ENCODE measurements at regions of chr6 and their contacts with region 1.

Region 1: GRCh38 chr6:15491255-15491985 is 171.4 kb downstream of the DTNBP1 start:
- DNase-seq: peak; percentile 46
- ATAC-seq: peak; percentile 82
- H3K4me3 ChIP-seq: no peak overlapping the region
- H3K27ac ChIP-seq: no peak overlapping the region
- H3K4me1 ChIP-seq: no peaks in the 10 kb centered on the region
- H3K27me3 ChIP-seq: no peaks in the 10 kb centered on the region
- CTCF ChIP-seq: peak; percentile 97

Region 2: DNA sequence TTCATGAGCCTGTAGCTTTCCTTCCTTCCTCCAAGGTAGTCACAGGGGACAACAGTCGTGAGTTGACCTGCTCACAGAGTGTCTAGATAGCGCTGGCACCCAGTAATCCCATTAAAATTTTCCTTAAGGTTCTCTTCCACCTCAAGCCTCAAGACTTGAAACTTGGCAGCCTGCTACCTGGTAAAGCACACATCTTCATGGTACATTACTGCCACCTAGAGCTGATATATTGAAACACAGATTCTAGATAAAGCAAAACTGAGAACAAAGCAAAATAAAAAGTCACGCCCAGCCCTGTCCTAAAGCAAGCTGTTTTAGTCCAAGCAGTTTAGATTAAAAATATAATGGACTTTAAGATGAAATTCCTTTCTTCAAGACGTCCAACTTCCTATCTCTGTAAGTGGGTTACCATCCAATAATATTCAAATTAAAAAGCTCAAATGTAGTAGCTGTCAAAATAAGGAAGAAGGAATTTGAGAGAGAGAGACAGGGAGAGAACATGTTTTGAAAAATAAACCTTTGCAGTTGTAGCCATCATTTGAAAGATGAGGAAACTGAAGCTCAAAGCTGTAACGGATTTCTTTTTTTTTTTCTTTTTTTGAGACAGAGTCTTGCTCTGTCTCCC is 1424.5 kb before region 1 on chr6:
- CTCF ChIA-PET with region 1: no interaction called
- POLR2A ChIA-PET with region 1: no interaction called
- in situ Hi-C with region 1: no loop called
- intact Hi-C with region 1: no loop called
- DNase-seq: no peak
- ATAC-seq: peak; percentile 88
- H3K4me3 ChIP-seq: no peak overlapping the region
- H3K27ac ChIP-seq: no peak overlapping the region
- H3K4me1 ChIP-seq: no peaks in the 10 kb centered on the region
- H3K27me3 ChIP-seq: no peaks in the 10 kb centered on the region
- CTCF ChIP-seq: peak; percentile 76

Region 3: GRCh38 chr6:14210663-14211561 is 1280.5 kb before region 1 on chr6:
- CTCF ChIA-PET with region 1: no interaction called
- POLR2A ChIA-PET with region 1: no interaction called
- in situ Hi-C with region 1: no loop called
- intact Hi-C with region 1: loop called (anchors 10 kb)
- DNase-seq: peak; percentile 15
- ATAC-seq: peak; percentile 99
- H3K4me3 ChIP-seq: peak overlapping the region; percentile 72 to 75
- H3K27ac ChIP-seq: peak overlapping the region; percentile 81
- H3K4me1 ChIP-seq: peaks cover 4% of the 10 kb centered on the region; the same call in 1 of the 2 replicates
- H3K27me3 ChIP-seq: peaks cover 2% of the 10 kb centered on the region; the same call in 1 of the 2 replicates
- CTCF ChIP-seq: peak; percentile 96

Region 4: DNA sequence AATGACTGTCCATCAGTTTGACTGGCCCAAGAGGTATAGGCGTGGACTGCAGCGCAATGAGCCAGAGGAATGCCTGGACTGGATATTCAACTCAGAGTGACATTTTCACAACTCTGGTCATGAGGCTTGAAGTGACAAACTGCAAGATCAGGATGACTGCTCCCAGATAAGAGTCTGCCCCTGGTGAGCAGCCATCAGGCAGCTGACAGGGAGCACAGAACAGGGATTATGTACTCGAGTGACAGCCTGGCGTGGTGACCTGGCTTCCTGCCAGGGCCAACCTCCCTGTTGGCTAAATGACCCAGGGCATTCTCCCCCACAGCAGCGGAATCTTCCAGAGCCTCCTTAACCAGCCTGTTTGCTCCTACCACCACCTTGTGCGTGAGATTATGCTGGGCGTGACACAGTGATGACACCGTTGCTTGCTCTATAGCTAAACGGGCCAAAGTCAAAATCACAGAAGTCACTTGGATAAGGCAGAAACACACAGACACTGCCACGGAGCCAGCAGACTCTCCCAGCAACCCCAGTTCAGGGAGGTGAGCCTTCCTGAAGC is 454.7 kb before region 1 on chr6:
- CTCF ChIA-PET with region 1: no interaction called
- POLR2A ChIA-PET with region 1: interaction called, 12 read pairs
- in situ Hi-C with region 1: no loop called
- intact Hi-C with region 1: no loop called
- DNase-seq: no peak
- ATAC-seq: no peak; the same call in 1 of the 2 replicates
- H3K4me3 ChIP-seq: no peak overlapping the region
- H3K27ac ChIP-seq: no peak overlapping the region
- H3K4me1 ChIP-seq: no peaks in the 10 kb centered on the region
- H3K27me3 ChIP-seq: no peaks in the 10 kb centered on the region
- CTCF ChIP-seq: no peak

Region 5: DNA sequence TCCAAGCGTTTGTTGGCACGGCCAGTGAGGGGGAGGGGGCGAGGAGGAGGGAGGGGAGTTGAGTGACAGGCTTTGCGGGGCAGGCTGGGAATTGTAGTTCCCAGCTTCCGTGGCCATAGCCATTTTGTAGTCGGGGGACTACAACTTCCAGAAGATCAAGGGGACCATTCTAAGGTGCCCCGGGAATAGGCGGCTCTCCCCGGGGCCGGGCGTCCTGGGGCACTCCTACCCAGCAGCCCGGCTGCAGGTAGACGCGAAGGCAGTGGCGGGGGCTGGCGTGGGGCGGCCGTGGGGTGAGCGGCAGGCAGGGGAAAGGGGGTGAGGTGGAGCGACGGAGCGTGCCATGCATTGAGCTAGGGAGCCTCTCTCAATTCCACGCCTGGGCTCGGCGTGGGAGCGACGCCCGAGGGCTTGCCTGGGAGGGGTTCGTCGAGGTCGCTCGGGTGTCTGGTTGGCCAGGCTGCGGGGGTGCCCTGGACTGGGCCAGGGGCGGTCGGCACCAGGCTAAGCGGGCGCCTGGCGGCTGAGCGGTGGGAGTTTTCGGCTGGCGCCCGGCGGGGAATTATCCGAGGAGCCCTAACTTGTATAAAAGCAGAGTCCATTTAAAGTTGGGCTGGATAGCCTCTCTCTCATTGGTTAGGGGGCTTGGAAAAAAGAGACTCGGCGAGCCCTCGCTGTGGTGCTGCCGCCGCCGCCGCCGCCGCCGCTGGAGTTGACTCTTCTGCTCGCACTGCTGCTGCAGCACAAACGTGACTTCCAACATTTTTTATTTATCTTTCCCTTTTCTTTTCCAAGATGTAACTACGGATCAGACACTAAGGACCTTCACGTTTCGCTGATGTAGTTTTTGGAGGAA is 245.8 kb before region 1 on chr6 and contains the start of gene JARID2:
- CTCF ChIA-PET with region 1: no interaction called
- POLR2A ChIA-PET with region 1: no interaction called
- in situ Hi-C with region 1: no loop called
- intact Hi-C with region 1: loop called (anchors 5 kb)
- DNase-seq: peak; percentile 83
- ATAC-seq: peak; percentile 85
- H3K4me3 ChIP-seq: peak within 1 kb of the TSS; percentile 77 to 81
- H3K27ac ChIP-seq: peak within 1 kb of the TSS; percentile 76
- H3K4me1 ChIP-seq: peaks cover 18% of the 10 kb centered on the region
- H3K27me3 ChIP-seq: no peaks in the 10 kb centered on the region
- CTCF ChIP-seq: no peak
- total RNA-seq, gene JARID2: 6.0 TPM

Region 6: DNA sequence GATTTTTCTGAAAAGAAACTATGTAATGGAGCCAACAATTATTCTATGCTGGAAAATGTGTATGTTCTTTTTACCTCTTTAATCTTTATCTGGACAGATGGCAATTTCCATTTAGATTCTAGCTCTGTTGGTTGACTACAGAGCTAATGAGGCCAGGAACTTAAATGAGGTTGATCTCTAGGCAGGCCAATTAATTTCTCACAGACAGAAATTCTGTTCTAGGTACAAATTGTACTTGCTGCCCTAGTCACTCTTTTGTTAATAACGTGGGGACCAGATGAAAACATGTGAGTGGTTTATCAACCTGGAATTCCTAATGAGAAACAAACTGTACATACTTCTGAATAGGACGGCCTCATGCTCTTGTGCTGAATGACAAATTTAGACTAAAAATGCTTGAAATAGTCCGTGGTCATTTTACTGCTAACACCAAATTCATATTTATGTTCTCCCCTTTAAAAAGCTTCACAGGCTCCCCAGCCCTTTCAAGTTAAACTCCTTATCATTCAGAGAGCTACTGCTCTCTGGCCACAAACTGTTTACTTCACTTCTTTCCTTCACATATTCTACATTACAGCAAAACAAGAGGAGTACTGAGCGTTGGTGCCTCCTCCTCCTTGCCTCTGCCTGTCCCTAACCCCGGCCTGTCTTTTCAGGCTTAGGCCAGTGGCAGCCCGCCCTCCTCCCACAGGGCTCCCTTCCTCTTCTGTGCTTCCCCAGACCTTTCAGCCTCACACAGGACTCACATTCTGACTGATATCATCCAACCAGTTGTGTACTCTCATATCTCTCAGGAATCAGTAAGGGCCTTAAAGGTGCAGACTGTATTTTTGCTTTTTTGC is 130.0 kb after region 1 on chr6:
- CTCF ChIA-PET with region 1: no interaction called
- POLR2A ChIA-PET with region 1: no interaction called
- in situ Hi-C with region 1: no loop called
- intact Hi-C with region 1: loop called (anchors 10 kb)
- DNase-seq: no peak
- ATAC-seq: no peak
- H3K4me3 ChIP-seq: no peak overlapping the region
- H3K27ac ChIP-seq: no peak overlapping the region
- H3K4me1 ChIP-seq: no peaks in the 10 kb centered on the region
- H3K27me3 ChIP-seq: no peaks in the 10 kb centered on the region
- CTCF ChIP-seq: no peak

Region 7: DNA sequence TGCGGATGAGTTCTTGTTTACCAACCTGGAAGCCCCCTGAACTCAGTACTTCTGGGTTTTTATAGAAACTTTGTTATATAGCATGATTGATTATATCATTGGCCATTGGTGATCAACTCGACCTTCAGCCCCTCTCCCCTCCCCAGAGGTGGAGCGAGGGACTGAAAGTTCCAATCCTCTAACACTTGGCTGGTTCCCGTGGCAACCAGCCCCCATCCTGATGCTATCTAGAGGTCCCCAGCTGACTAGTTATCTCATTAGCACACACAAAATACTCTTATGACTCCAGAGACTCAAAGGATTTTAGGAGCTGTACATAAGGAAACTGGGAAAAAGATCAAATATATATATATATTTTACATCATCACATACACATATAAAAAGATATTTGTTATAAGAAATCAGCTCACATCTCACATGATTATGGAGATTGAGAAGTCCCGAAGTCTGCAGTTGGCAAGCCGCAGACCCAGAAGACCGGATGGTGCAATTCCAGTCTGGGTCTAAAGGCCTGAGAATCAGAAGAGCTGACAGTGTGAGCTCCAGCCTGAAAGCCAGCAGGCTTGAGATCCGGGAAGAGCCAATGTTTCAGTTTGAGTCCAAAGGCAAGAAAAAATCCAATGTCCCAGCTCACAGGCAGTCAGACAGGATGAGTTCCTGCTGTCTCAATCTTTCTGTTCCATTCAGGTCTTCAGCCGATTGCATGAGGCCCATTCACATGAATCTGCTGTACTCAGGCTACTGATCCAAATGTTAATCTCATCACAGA is 350.7 kb after region 1 on chr6:
- CTCF ChIA-PET with region 1: no interaction called
- POLR2A ChIA-PET with region 1: no interaction called
- in situ Hi-C with region 1: no loop called
- intact Hi-C with region 1: no loop called
- DNase-seq: no peak
- ATAC-seq: no peak
- H3K4me3 ChIP-seq: no peak overlapping the region
- H3K27ac ChIP-seq: no peak overlapping the region
- H3K4me1 ChIP-seq: no peaks in the 10 kb centered on the region
- H3K27me3 ChIP-seq: peaks cover 2% of the 10 kb centered on the region; the same call in 1 of the 2 replicates
- CTCF ChIP-seq: no peak

Measured in Panc1 (cell line).